ENCODE measurements at regions of chrX and their contacts with region 1.

Region 1: GRCh38 chrX:130190801-130191200 is 19.0 kb downstream of the RAB33A start:
- DNase-seq: no peak
- ATAC-seq: no peak
- H3K4me3 ChIP-seq: no peak overlapping the region
- H3K4me3 Mint-ChIP-seq: no peak overlapping the region
- H3K27ac ChIP-seq: no peak overlapping the region
- H3K27ac Mint-ChIP-seq: no peak overlapping the region
- H3K4me1 ChIP-seq: no peaks in the 10 kb centered on the region
- H3K4me1 Mint-ChIP-seq: peaks cover 2% of the 10 kb centered on the region
- H3K27me3 ChIP-seq: no peaks in the 10 kb centered on the region
- H3K27me3 Mint-ChIP-seq: no peaks in the 10 kb centered on the region
- CTCF ChIP-seq: no peak

Region 2: DNA sequence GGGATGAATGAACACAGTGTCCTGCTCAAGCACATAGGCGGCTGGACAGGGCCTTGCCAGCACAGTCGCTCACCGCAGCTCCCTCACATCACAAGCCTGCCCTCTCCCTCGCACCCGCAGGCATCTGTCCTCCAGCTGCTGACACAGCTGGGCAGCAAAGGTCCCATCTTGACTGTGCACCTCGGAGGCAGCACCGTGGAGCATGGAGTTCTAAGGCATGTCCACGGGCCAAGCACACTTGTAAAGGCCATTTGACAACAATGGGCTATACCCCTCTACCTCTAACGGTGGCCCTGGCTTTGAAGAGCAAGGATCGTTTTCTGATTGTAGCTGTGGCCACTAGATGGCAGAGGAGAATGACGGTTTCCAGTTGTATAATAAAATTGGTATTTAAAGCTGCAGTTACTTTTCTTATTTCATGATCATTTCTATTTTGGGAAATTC is 589.8 kb before region 1 on chrX:
- CTCF ChIA-PET with region 1: interaction called, 3 read pairs
- POLR2A ChIA-PET with region 1: no interaction called
- intact Hi-C with region 1: loop called (anchors 2 to 5 kb)
- DNase-seq: peak in 4 of 9 experiments; percentile 4 to 54 (median 28)
- ATAC-seq: no peak
- H3K4me3 ChIP-seq: no peak overlapping the region
- H3K4me3 Mint-ChIP-seq: no peak overlapping the region
- H3K27ac ChIP-seq: no peak overlapping the region
- H3K27ac Mint-ChIP-seq: no peak overlapping the region
- H3K4me1 ChIP-seq: peaks cover 11% of the 10 kb centered on the region
- H3K4me1 Mint-ChIP-seq: peaks cover 21% of the 10 kb centered on the region
- H3K27me3 ChIP-seq: no peaks in the 10 kb centered on the region
- H3K27me3 Mint-ChIP-seq: no peaks in the 10 kb centered on the region
- CTCF ChIP-seq: peak; percentile 35

Measured in CD8-positive, alpha-beta T cell (primary cell).